ENCODE measurements at regions of chr2 and their contacts with region 1.

Region 1: DNA sequence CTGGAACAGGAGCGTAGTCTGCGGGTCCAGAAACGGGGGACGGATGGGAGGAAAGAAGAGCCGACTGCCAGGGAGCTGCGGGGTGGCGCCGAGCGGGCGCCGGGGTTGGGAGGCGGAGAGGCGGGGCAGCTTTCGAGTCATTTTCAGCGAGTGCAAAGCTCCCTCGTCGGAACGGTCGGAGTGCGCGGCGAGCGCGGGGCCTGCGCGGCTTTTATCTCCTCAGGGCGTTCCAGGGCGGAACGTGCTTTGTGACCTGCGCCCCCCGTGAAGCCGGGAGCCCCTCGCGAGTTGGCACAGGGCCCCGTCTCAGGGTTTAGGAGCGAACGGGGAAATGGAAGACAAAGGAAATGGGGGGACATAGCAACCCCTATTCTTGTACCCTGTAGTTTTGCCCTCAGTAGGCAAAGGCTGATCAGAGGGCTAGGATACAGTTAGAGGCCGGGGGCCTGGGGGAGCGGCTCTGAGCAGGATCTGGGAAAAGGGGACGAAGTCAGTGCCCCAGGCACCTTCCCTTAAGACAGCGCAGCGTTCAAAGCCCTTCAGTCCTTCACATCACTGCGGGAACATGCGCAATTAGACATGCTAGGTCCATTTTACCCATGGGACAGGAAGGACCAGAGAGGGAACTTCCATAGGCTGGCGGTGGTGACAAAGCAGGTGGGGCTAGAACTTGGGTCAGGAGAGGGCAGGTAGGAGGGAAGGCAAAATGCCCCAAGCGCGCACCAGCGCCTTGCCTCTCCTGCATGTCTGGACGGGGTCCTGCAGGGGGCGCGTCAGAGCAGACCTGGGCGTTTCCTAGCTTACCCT is 60.1 kb upstream of the IL1RL1 start:
- DNase-seq: no peak
- ATAC-seq: peak; percentile 85
- H3K4me3 ChIP-seq: peak overlapping the region; percentile 27 to 60
- H3K27ac ChIP-seq: no peak overlapping the region
- H3K4me1 ChIP-seq: peaks cover 3% of the 10 kb centered on the region; the same call in 1 of the 2 replicates
- H3K27me3 ChIP-seq: peaks cover 2% of the 10 kb centered on the region
- CTCF ChIP-seq: peak; percentile 88

Region 2: DNA sequence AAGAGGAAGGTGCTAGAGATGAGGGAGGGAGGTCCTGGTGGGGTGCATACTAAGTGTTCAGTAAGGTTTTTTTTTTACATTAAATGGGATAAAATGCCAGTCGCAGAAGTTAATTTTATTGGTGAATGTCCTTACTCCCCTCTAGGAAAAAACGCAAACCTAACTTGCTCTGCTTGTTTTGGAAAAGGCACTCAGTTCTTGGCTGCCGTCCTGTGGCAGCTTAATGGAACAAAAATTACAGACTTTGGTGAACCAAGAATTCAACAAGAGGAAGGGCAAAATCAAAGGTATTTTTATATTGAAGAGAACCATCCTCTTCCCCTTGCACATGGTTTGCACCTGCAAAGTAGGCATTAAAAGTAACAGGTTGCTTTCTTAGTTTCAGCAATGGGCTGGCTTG is 91.6 kb after region 1 on chr2:
- CTCF ChIA-PET with region 1: no interaction called
- POLR2A ChIA-PET with region 1: no interaction called
- in situ Hi-C with region 1: no loop called
- intact Hi-C with region 1: no loop called
- DNase-seq: no peak
- ATAC-seq: no peak
- H3K4me3 ChIP-seq: no peak overlapping the region
- H3K27ac ChIP-seq: no peak overlapping the region
- H3K4me1 ChIP-seq: no peaks in the 10 kb centered on the region
- H3K27me3 ChIP-seq: peaks cover 2% of the 10 kb centered on the region
- CTCF ChIP-seq: 0 out of 2 replicates have a peak, but pooled peaks have one; percentile 4

Region 3: GRCh38 chr2:102355526-102356380 is 104.5 kb after region 1 on chr2 and contains the start of gene IL18R1:
- CTCF ChIA-PET with region 1: no interaction called
- POLR2A ChIA-PET with region 1: no interaction called
- in situ Hi-C with region 1: no loop called
- intact Hi-C with region 1: loop called (anchors 5 kb)
- DNase-seq: no peak
- ATAC-seq: peak; percentile 100
- H3K4me3 ChIP-seq: peak within 1 kb of the TSS; percentile 42 to 66
- H3K27ac ChIP-seq: no peak within 1 kb of the TSS
- H3K4me1 ChIP-seq: no peaks in the 10 kb centered on the region
- H3K27me3 ChIP-seq: peaks cover 15% of the 10 kb centered on the region
- CTCF ChIP-seq: peak; percentile 98
- total RNA-seq, gene IL18R1: 0.08 TPM

Measured in Panc1 (cell line).